B cell (primary cell): ENCODE measurements at regions of chr16 and their contacts with region 1.

Region 1: GRCh38 chr16:22001591-22001990 is 675 bp upstream of the PDZD9 start:
- DNase-seq: peak; percentile 16
- ATAC-seq: no peak
- H3K4me3 ChIP-seq: no peak overlapping the region
- H3K4me3 Mint-ChIP-seq: no peak overlapping the region
- H3K27ac ChIP-seq: no peak overlapping the region
- H3K27ac Mint-ChIP-seq: no peak overlapping the region
- H3K4me1 ChIP-seq: peaks cover 4 to 9% of the 10 kb centered on the region in 2 donors
- H3K4me1 Mint-ChIP-seq: peaks cover 6% of the 10 kb centered on the region
- H3K27me3 ChIP-seq: no peaks in the 10 kb centered on the region
- H3K27me3 Mint-ChIP-seq: no peaks in the 10 kb centered on the region
- CTCF ChIP-seq: no peak

Region 2: GRCh38 chr16:21989133-21989532 is 12.5 kb before region 1 on chr16:
- CTCF ChIA-PET with region 1: interaction called, 10 read pairs
- POLR2A ChIA-PET with region 1: no interaction called
- intact Hi-C with region 1: no loop called
- DNase-seq: no peak
- ATAC-seq: no peak
- H3K4me3 ChIP-seq: no peak overlapping the region
- H3K4me3 Mint-ChIP-seq: no peak overlapping the region
- H3K27ac ChIP-seq: no peak overlapping the region
- H3K27ac Mint-ChIP-seq: no peak overlapping the region
- H3K4me1 ChIP-seq: no peaks in the 10 kb centered on the region
- H3K4me1 Mint-ChIP-seq: no peaks in the 10 kb centered on the region
- H3K27me3 ChIP-seq: no peaks in the 10 kb centered on the region
- H3K27me3 Mint-ChIP-seq: no peaks in the 10 kb centered on the region
- CTCF ChIP-seq: no peak

Region 3: DNA sequence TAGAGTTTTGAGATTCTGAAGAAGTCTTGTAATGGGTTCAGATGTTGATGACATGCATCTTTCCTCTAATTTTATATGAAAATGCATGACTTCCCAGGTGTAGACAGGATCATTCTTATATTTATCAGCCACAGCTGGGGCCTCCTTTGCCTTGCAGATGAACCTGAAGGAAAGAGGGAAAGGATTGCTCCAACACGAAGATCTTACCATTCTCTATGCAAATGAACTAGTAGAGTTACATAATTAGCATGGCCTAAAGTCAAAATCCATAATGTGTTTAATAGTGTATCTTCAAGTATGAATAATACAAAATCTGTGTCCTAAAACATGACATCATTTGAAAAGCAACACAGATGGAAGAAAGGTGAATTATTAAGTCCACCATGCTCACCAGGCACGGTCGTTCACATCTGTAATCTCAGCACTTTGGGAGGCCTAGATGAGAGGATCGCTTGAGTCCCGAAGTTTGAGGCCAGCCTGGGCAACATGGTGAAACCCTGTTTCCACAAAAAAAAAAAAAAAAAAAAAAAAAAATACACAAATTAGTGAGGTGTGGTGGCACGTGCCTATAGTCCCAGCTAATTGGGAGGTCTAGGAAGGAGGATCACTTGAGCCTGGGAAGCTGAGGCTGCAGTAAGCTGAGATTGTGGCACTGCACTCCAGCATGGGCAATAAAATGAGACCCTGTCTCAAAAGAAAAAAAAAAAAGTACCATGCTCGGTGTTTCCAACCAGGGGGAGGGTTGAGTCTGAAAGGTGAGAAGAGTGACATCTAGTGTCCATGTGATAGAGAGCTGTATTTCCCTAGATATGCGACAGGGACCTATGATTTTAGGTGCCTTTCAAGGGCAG is 97.0 kb after region 1 on chr16:
- CTCF ChIA-PET with region 1: interaction called, 15 read pairs
- POLR2A ChIA-PET with region 1: no interaction called
- intact Hi-C with region 1: loop called (anchors 1 kb)
- DNase-seq: peak; percentile 56
- ATAC-seq: peak; percentile 58
- H3K4me3 ChIP-seq: no peak overlapping the region
- H3K4me3 Mint-ChIP-seq: peak overlapping the region; percentile 54
- H3K27ac ChIP-seq: no peak overlapping the region
- H3K27ac Mint-ChIP-seq: no peak overlapping the region
- H3K4me1 ChIP-seq: peaks cover 0 to 4% of the 10 kb centered on the region in 2 donors
- H3K4me1 Mint-ChIP-seq: peaks cover 4% of the 10 kb centered on the region
- H3K27me3 ChIP-seq: peaks cover 0 to 6% (median 4%) of the 10 kb centered on the region in 4 experiments
- H3K27me3 Mint-ChIP-seq: peaks cover 10% of the 10 kb centered on the region
- CTCF ChIP-seq: peak; percentile 61

Region 4: GRCh38 chr16:22262460-22262859 is 260.9 kb after region 1 on chr16:
- CTCF ChIA-PET with region 1: no interaction called
- POLR2A ChIA-PET with region 1: no interaction called
- intact Hi-C with region 1: no loop called
- DNase-seq: no peak
- ATAC-seq: no peak
- H3K4me3 ChIP-seq: no peak overlapping the region
- H3K4me3 Mint-ChIP-seq: no peak overlapping the region
- H3K27ac ChIP-seq: no peak overlapping the region
- H3K27ac Mint-ChIP-seq: no peak overlapping the region
- H3K4me1 ChIP-seq: no peaks in the 10 kb centered on the region
- H3K4me1 Mint-ChIP-seq: no peaks in the 10 kb centered on the region
- H3K27me3 ChIP-seq: no peaks in the 10 kb centered on the region
- H3K27me3 Mint-ChIP-seq: no peaks in the 10 kb centered on the region
- CTCF ChIP-seq: no peak

Region 5: GRCh38 chr16:22659933-22660332 is 658.3 kb after region 1 on chr16:
- CTCF ChIA-PET with region 1: no interaction called
- POLR2A ChIA-PET with region 1: no interaction called
- intact Hi-C with region 1: no loop called
- DNase-seq: no peak
- ATAC-seq: no peak
- H3K4me3 ChIP-seq: no peak overlapping the region
- H3K4me3 Mint-ChIP-seq: no peak overlapping the region
- H3K27ac ChIP-seq: no peak overlapping the region
- H3K27ac Mint-ChIP-seq: no peak overlapping the region
- H3K4me1 ChIP-seq: no peaks in the 10 kb centered on the region
- H3K4me1 Mint-ChIP-seq: no peaks in the 10 kb centered on the region
- H3K27me3 ChIP-seq: peaks cover 0 to 19% (median 12%) of the 10 kb centered on the region in 4 experiments
- H3K27me3 Mint-ChIP-seq: peaks cover 3% of the 10 kb centered on the region
- CTCF ChIP-seq: no peak